ENCODE measurements at regions of chr18 and their contacts with region 1.

Region 1: GRCh38 chr18:12308386-12309100 is 502 bp downstream of the TUBB6 start:
- DNase-seq: peak; percentile 39 to 65
- ATAC-seq: peak; percentile 74 to 83
- H3K4me3 ChIP-seq: peak overlapping the region; percentile 62 to 73 (median 66)
- H3K27ac ChIP-seq: peak overlapping the region; percentile 72 to 87 (median 78)
- H3K4me1 ChIP-seq: peaks cover 6 to 18% of the 10 kb centered on the region in 2 donors
- H3K27me3 ChIP-seq: peaks cover 20 to 31% (median 22%) of the 10 kb centered on the region in 3 donors
- CTCF ChIP-seq: no peak
- POLR2A ChIP-seq: peak in 1 of 2 donors; percentile 51

Region 2: DNA sequence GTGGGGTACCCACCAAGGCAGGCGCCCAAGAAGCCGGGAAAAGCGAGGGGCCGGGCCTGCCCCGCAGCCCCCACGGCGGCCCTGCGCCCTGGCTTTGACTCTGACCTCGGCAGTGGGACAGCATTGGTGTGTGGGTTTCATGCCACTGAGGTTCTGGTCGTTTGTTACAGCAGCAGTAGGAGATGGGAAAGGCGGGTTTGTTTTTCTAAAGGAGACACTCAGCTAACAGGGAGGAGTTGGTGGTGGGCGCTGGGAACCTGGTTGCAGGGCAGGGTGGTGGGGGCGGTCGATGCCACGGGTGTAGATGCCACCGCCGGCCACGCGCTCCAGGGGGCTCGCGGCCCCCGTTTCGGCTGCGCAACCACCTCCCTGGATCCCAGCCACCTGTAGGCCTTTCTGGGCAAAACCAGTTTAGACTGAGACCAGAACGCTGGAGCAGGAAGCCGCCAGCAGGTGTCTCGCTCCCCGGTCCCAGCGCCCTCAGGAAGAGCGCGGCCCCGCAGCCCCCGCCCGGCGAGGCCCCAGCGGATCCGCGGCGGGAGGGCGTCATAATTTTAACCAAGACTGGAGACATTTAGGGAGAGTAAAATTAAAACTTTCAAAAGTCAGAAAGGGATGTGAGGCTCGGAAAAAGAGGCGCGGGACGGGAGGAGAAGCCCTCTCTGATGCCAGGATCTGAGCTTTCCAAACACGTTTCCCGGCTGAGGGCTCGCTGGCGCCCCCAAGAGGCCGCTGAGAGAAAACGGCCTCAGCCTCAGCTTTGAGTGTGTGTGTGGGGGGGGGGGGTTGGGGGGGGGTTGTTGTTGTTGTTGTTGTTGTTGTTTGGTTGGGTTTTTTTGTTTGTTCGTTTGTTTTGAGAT is 36.9 kb before region 1 on chr18:
- in situ Hi-C with region 1: no loop called
- intact Hi-C with region 1: loop called (anchors 5 kb)
- DNase-seq: peak in 1 of 2 donors; percentile 39
- ATAC-seq: peak; percentile 89 to 96
- H3K4me3 ChIP-seq: peak overlapping the region; percentile 48 to 86 (median 54)
- H3K27ac ChIP-seq: peak overlapping the region; percentile 34 to 75 (median 64)
- H3K4me1 ChIP-seq: no peaks in the 10 kb centered on the region
- H3K27me3 ChIP-seq: no peaks in the 10 kb centered on the region
- CTCF ChIP-seq: peak; percentile 29 to 70 (median 60)
- POLR2A ChIP-seq: no peak